ENCODE measurements at regions of chr20 and their contacts with region 1.

Region 1: GRCh38 chr20:45934586-45935415 is at the start of gene PCIF1:
- DNase-seq: peak; percentile 98 to 99 (median 98)
- H3K4me3 ChIP-seq: peak within 1 kb of the TSS; percentile 83 to 97
- H3K4me3 Mint-ChIP-seq: peak within 1 kb of the TSS; percentile 95 to 99 (median 97)
- H3K27ac ChIP-seq: peak within 1 kb of the TSS; percentile 99
- H3K27ac Mint-ChIP-seq: peak within 1 kb of the TSS; percentile 96 to 99 (median 98)
- H3K4me1 ChIP-seq: peaks cover 35% of the 10 kb centered on the region
- H3K4me1 Mint-ChIP-seq: peaks cover 17 to 48% (median 30%) of the 10 kb centered on the region in 4 donors
- H3K27me3 ChIP-seq: no peaks in the 10 kb centered on the region
- H3K27me3 Mint-ChIP-seq: no peaks in the 10 kb centered on the region
- total RNA-seq, gene PCIF1: 63.1 to 69.4 TPM

Region 2: DNA sequence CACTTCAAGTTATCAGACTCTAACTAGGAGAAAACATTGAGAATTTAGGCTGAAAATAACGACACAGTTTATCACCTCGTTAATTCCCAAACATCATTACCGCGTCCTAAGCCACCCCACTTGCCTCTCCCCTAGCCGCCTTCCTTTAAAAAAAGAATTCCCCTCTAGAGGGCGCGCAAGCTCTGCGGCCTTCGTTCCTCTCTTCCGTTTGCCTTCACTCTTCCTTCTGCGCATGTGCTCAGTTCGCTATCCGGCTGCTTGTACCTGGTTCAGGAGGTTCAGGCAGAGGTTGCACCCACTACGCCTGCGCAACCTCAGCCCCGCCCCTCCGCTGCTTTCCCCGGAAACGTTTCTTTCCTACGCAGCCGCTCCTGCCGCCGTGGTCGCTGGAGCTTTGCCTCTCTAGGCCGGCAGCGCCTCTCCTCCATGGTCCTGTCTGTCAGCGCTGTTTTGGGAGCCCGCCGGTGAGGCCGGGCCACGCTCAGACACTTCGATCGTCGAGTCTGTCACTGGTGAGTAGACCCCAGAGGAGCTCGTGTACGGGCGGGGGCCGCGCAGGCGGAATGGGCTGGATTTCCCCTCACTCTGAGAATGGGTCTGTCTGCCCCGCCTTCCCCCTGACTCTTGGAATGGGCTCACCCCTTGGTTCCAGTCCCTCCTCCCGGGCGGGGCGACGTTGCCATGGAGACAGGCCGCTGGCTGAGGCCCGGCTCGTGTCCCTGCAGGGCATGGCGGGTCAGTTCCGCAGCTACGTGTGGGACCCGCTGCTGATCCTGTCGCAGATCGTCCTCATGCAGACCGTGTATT is 571.8 kb before region 1 on chr20 and contains the start of gene SYS1:
- CTCF ChIA-PET with region 1: no interaction called
- POLR2A ChIA-PET with region 1: interaction called, 11 read pairs
- intact Hi-C with region 1: no loop called
- DNase-seq: peak; percentile 98 to 99 (median 99)
- H3K4me3 ChIP-seq: peak within 1 kb of the TSS; percentile 67 to 83
- H3K4me3 Mint-ChIP-seq: peak within 1 kb of the TSS; percentile 95 to 99 (median 98)
- H3K27ac ChIP-seq: peak within 1 kb of the TSS; percentile 97
- H3K27ac Mint-ChIP-seq: peak within 1 kb of the TSS; percentile 98 to 100 (median 100)
- H3K4me1 ChIP-seq: peaks cover 41% of the 10 kb centered on the region
- H3K4me1 Mint-ChIP-seq: peaks cover 28 to 59% (median 52%) of the 10 kb centered on the region in 4 donors
- H3K27me3 ChIP-seq: no peaks in the 10 kb centered on the region
- H3K27me3 Mint-ChIP-seq: no peaks in the 10 kb centered on the region
- total RNA-seq, gene SYS1: 56.4 to 56.6 TPM

Region 3: DNA sequence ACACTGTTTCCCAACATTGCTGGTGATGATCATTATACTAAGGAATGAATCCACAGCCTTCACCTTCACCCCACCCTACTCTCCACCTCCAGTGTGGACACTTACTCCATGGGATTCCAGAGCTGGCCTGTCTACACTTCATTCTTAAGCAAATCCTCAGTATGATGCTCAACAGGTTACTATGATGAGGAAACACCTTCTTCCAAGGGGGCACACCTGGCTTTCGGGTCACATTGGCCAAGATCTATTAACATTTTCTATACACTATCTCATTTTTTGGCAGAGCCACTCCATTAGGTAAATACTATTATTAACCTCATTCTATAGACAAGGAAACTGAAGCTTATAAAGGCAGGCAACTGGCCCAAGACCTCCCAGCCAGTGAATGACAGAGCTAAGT is 379.6 kb before region 1 on chr20:
- CTCF ChIA-PET with region 1: no interaction called
- POLR2A ChIA-PET with region 1: no interaction called
- intact Hi-C with region 1: no loop called
- DNase-seq: no peak
- H3K4me3 ChIP-seq: no peak overlapping the region
- H3K4me3 Mint-ChIP-seq: no peak overlapping the region
- H3K27ac ChIP-seq: no peak overlapping the region
- H3K27ac Mint-ChIP-seq: no peak overlapping the region
- H3K4me1 ChIP-seq: no peaks in the 10 kb centered on the region
- H3K4me1 Mint-ChIP-seq: no peaks in the 10 kb centered on the region
- H3K27me3 ChIP-seq: peaks cover 3% of the 10 kb centered on the region
- H3K27me3 Mint-ChIP-seq: peaks cover 26 to 37% of the 10 kb centered on the region in 2 donors

Region 4: GRCh38 chr20:45735552-45735951 is 199.2 kb before region 1 on chr20:
- CTCF ChIA-PET with region 1: no interaction called
- POLR2A ChIA-PET with region 1: no interaction called
- intact Hi-C with region 1: no loop called
- DNase-seq: no peak
- H3K4me3 ChIP-seq: no peak overlapping the region
- H3K4me3 Mint-ChIP-seq: no peak overlapping the region
- H3K27ac ChIP-seq: no peak overlapping the region
- H3K27ac Mint-ChIP-seq: no peak overlapping the region
- H3K4me1 ChIP-seq: no peaks in the 10 kb centered on the region
- H3K4me1 Mint-ChIP-seq: no peaks in the 10 kb centered on the region
- H3K27me3 ChIP-seq: no peaks in the 10 kb centered on the region
- H3K27me3 Mint-ChIP-seq: peaks cover 16 to 29% of the 10 kb centered on the region in 2 donors

Region 5: GRCh38 chr20:45812157-45813020 is 122.4 kb before region 1 on chr20 and contains the start of gene UBE2C:
- CTCF ChIA-PET with region 1: no interaction called
- POLR2A ChIA-PET with region 1: interaction called, 8 read pairs
- intact Hi-C with region 1: loop called (anchors 1 kb)
- DNase-seq: peak; percentile 92 to 96 (median 94)
- H3K4me3 ChIP-seq: peak within 1 kb of the TSS; percentile 37 to 68
- H3K4me3 Mint-ChIP-seq: peak within 1 kb of the TSS; percentile 82 to 92 (median 86)
- H3K27ac ChIP-seq: peak within 1 kb of the TSS; percentile 44
- H3K27ac Mint-ChIP-seq: peak within 1 kb of the TSS; percentile 53 to 89 (median 70)
- H3K4me1 ChIP-seq: peaks cover 15% of the 10 kb centered on the region
- H3K4me1 Mint-ChIP-seq: peaks cover 7 to 23% (median 14%) of the 10 kb centered on the region in 4 donors
- H3K27me3 ChIP-seq: no peaks in the 10 kb centered on the region
- H3K27me3 Mint-ChIP-seq: no peaks in the 10 kb centered on the region
- total RNA-seq, gene UBE2C: 0.55 to 0.61 TPM

Region 6: DNA sequence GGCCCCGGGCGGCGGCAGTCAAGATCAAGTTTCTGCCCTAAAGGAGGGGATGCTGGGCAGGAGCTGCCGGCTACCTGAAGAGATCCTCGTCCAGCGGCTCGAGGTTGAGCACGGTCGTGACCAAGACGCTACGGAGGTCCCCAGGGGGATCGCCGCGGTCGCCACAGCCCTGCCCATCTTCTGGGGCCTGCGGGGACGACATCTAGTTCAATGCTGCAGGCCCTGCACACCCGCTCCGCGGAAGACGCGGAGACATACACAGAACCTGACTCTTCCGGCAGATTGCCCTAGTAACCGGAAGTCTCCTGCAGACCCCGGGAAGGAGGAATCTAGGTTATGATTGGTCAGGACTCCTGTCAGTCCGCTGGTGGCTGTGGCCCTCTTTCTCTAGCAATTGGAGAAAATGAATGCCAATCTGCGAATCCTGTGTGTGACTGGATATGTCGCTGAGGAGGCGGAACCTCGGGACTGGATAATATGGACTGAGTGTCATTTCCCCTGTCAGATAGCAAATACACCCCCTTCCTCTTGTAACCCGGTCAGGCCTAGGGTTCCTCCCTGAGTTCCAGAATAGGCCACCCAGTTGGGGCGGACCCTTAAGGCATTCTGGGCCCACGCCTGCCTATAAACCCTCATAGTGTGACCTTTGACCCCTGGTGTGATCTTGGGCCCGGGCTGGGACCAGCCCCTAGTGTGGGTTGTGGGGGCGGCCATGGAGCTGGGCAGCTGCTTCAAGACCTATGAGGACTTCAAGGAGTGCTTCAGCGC is 77.5 kb before region 1 on chr20 and contains the starts of genes ACOT8 and ZSWIM3:
- CTCF ChIA-PET with region 1: interaction called, 3 read pairs
- POLR2A ChIA-PET with region 1: interaction called, 68 read pairs
- intact Hi-C with region 1: loop called (anchors 1 kb)
- DNase-seq: peak; percentile 97 to 99 (median 99)
- H3K4me3 ChIP-seq: peak within 1 kb of the TSS; percentile 73 to 78
- H3K4me3 Mint-ChIP-seq: peak within 1 kb of the TSS; percentile 86 to 98 (median 95)
- H3K27ac ChIP-seq: peak within 1 kb of the TSS; percentile 76
- H3K27ac Mint-ChIP-seq: peak within 1 kb of the TSS; percentile 84 to 99 (median 98)
- H3K4me1 ChIP-seq: peaks cover 35% of the 10 kb centered on the region
- H3K4me1 Mint-ChIP-seq: peaks cover 25 to 66% (median 39%) of the 10 kb centered on the region in 4 donors
- H3K27me3 ChIP-seq: no peaks in the 10 kb centered on the region
- H3K27me3 Mint-ChIP-seq: no peaks in the 10 kb centered on the region
- total RNA-seq, gene ACOT8: 30.6 to 33.4 TPM
- total RNA-seq, gene ZSWIM3: 6.7 to 7.1 TPM

Region 7: GRCh38 chr20:45910670-45911485 is 23.9 kb before region 1 on chr20:
- CTCF ChIA-PET with region 1: no interaction called
- POLR2A ChIA-PET with region 1: interaction called, 15 read pairs
- intact Hi-C with region 1: no loop called
- DNase-seq: peak; percentile 68 to 85 (median 78)
- H3K4me3 ChIP-seq: peak overlapping the region; percentile 49 to 76
- H3K4me3 Mint-ChIP-seq: peak overlapping the region; percentile 70 to 89 (median 86)
- H3K27ac ChIP-seq: peak overlapping the region; percentile 1
- H3K27ac Mint-ChIP-seq: peak overlapping the region in 6 of 7 donors; percentile 3 to 88 (median 72)
- H3K4me1 ChIP-seq: peaks cover 18% of the 10 kb centered on the region
- H3K4me1 Mint-ChIP-seq: peaks cover 7 to 19% (median 13%) of the 10 kb centered on the region in 4 donors
- H3K27me3 ChIP-seq: peaks cover 8% of the 10 kb centered on the region
- H3K27me3 Mint-ChIP-seq: peaks cover 9% of the 10 kb centered on the region in 2 donors

Region 8: GRCh38 chr20:45957081-45957941 is 22.5 kb after region 1 on chr20:
- CTCF ChIA-PET with region 1: interaction called, 3 read pairs
- POLR2A ChIA-PET with region 1: interaction called, 175 read pairs
- intact Hi-C with region 1: no loop called
- DNase-seq: no peak
- H3K4me3 ChIP-seq: no peak overlapping the region
- H3K4me3 Mint-ChIP-seq: no peak overlapping the region
- H3K27ac ChIP-seq: no peak overlapping the region
- H3K27ac Mint-ChIP-seq: peak overlapping the region in 1 of 7 donors; percentile 48
- H3K4me1 ChIP-seq: no peaks in the 10 kb centered on the region
- H3K4me1 Mint-ChIP-seq: peaks cover 0 to 2% (median 0%) of the 10 kb centered on the region in 4 donors
- H3K27me3 ChIP-seq: no peaks in the 10 kb centered on the region
- H3K27me3 Mint-ChIP-seq: no peaks in the 10 kb centered on the region

Region 9: GRCh38 chr20:46013826-46014516 is 79.2 kb after region 1 on chr20:
- CTCF ChIA-PET with region 1: interaction called, 23 read pairs
- POLR2A ChIA-PET with region 1: interaction called, 3 read pairs
- intact Hi-C with region 1: no loop called
- DNase-seq: peak; percentile 59 to 82 (median 64)
- H3K4me3 ChIP-seq: peak overlapping the region in 1 of 2 donors; percentile 33
- H3K4me3 Mint-ChIP-seq: peak overlapping the region; percentile 45 to 81 (median 64)
- H3K27ac ChIP-seq: no peak overlapping the region
- H3K27ac Mint-ChIP-seq: peak overlapping the region in 3 of 7 donors; percentile 54 to 78 (median 57)
- H3K4me1 ChIP-seq: peaks cover 50% of the 10 kb centered on the region
- H3K4me1 Mint-ChIP-seq: peaks cover 25 to 67% (median 45%) of the 10 kb centered on the region in 4 donors
- H3K27me3 ChIP-seq: peaks cover 30% of the 10 kb centered on the region
- H3K27me3 Mint-ChIP-seq: peaks cover 26 to 61% of the 10 kb centered on the region in 2 donors

Region 10: GRCh38 chr20:46031701-46032254 is 97.0 kb after region 1 on chr20:
- CTCF ChIA-PET with region 1: no interaction called
- POLR2A ChIA-PET with region 1: no interaction called
- intact Hi-C with region 1: no loop called
- DNase-seq: no peak
- H3K4me3 ChIP-seq: no peak overlapping the region
- H3K4me3 Mint-ChIP-seq: no peak overlapping the region
- H3K27ac ChIP-seq: no peak overlapping the region
- H3K27ac Mint-ChIP-seq: no peak overlapping the region
- H3K4me1 ChIP-seq: no peaks in the 10 kb centered on the region
- H3K4me1 Mint-ChIP-seq: no peaks in the 10 kb centered on the region
- H3K27me3 ChIP-seq: peaks cover 33% of the 10 kb centered on the region
- H3K27me3 Mint-ChIP-seq: peaks cover 43 to 59% of the 10 kb centered on the region in 2 donors

Region 11: DNA sequence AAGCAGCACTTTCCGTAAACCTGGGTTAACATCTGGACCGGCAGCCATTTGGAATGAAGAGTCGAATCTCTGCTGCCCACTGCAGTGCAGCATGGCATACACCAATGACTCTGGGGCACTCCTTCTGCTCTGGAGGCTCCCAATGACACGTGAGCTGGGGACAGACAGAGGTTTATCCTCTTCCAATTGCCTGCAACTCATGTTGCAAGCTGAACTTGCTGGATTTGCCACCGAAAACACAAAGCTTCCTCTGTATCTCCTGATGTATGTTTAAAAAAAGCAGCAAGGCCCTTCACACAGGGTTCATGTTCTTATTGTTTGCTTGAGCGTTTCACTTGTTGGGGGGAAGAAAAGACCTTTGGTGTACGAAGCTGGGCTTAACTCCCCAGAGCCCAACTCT is 144.2 kb after region 1 on chr20:
- CTCF ChIA-PET with region 1: no interaction called
- POLR2A ChIA-PET with region 1: no interaction called
- intact Hi-C with region 1: no loop called
- DNase-seq: no peak
- H3K4me3 ChIP-seq: no peak overlapping the region
- H3K4me3 Mint-ChIP-seq: no peak overlapping the region
- H3K27ac ChIP-seq: no peak overlapping the region
- H3K27ac Mint-ChIP-seq: no peak overlapping the region
- H3K4me1 ChIP-seq: peaks cover 22% of the 10 kb centered on the region
- H3K4me1 Mint-ChIP-seq: peaks cover 23 to 40% (median 27%) of the 10 kb centered on the region in 4 donors
- H3K27me3 ChIP-seq: no peaks in the 10 kb centered on the region
- H3K27me3 Mint-ChIP-seq: no peaks in the 10 kb centered on the region